ENCODE measurements at regions of chr11 and their contacts with region 1.

Region 1: GRCh38 chr11:59680287-59681154 is 11.7 kb upstream of the PATL1 start:
- DNase-seq: no peak
- H3K4me3 ChIP-seq: no peak overlapping the region
- H3K27ac ChIP-seq: no peak overlapping the region
- H3K4me1 ChIP-seq: no peaks in the 10 kb centered on the region
- H3K27me3 ChIP-seq: no peaks in the 10 kb centered on the region
- CTCF ChIP-seq: peak; percentile 20 to 35 (median 33)
- POLR2A ChIP-seq: no peak

Region 2: DNA sequence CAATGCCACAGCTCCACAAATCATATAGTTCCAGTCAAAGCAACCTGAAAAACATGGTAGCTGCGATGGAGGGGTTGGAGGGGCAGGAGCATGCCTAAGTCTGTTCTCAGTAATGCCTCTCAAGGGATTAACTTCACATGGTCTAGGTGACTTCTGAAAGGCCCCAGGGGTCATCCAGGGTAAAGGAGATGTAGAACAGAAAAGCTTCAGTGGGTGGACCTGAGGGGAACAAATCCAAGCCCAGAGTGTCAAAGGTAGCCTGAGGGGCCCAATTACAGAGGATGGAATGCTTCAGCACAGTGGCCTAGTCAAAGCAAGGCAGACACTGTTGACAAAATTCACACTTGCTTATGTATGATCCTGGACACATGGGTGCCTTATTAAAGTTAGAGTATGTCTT is 145.8 kb before region 1 on chr11:
- intact Hi-C with region 1: loop called (anchors 10 kb)
- DNase-seq: no peak
- H3K4me3 ChIP-seq: no peak overlapping the region
- H3K27ac ChIP-seq: no peak overlapping the region
- H3K4me1 ChIP-seq: peaks cover 6% of the 10 kb centered on the region
- H3K27me3 ChIP-seq: no peaks in the 10 kb centered on the region
- CTCF ChIP-seq: no peak
- POLR2A ChIP-seq: no peak

Region 3: DNA sequence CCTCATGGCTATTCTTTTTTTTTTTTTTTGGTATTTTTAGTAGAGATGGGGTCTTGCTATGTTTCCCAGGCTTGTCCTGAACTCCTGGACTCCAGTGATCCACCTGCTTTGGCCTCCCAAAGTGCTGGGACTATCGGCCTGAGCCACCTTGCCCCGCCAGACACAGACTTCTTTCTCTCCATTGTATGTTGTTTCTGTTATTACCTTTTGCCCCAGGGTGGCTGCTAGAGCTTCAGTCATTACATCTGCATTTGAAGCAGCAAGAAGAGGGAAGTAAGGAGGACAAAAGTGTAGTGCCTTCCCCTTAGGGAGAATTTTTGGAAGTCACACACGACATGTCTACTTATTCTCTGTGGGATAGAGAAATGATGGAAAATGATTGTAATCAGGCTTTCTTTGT is 54.8 kb before region 1 on chr11:
- intact Hi-C with region 1: no loop called
- DNase-seq: no peak
- H3K4me3 ChIP-seq: no peak overlapping the region
- H3K27ac ChIP-seq: no peak overlapping the region
- H3K4me1 ChIP-seq: no peaks in the 10 kb centered on the region
- H3K27me3 ChIP-seq: no peaks in the 10 kb centered on the region
- CTCF ChIP-seq: no peak
- POLR2A ChIP-seq: no peak

Region 4: GRCh38 chr11:59753650-59754493 is 73.4 kb after region 1 on chr11:
- intact Hi-C with region 1: no loop called
- DNase-seq: no peak
- H3K4me3 ChIP-seq: peak overlapping the region; percentile 60 to 97
- H3K27ac ChIP-seq: peak overlapping the region; percentile 100
- H3K4me1 ChIP-seq: peaks cover 28% of the 10 kb centered on the region
- H3K27me3 ChIP-seq: no peaks in the 10 kb centered on the region
- CTCF ChIP-seq: peak; percentile 93 to 95 (median 94)
- POLR2A ChIP-seq: no peak

Region 5: DNA sequence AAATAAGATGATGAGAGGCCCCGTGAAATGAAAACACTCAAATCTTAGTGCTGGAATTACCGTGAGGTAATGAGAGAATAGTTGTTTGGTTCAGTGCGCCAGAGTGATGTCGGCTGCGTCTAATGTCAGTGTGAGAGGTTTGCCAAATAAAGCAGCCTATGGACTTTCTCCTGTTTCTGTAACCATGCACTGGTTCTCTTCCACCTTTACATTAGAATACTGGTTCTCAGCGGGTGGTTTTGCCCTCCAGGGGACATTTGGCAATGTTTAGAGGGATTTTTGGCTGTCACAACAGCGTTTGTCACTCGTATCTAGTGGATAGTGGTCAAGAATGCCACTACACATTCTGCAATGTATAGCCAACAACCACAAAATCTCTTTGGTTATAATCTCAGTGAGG is 337.5 kb after region 1 on chr11:
- intact Hi-C with region 1: no loop called
- DNase-seq: no peak
- H3K4me3 ChIP-seq: no peak overlapping the region
- H3K27ac ChIP-seq: no peak overlapping the region
- H3K4me1 ChIP-seq: no peaks in the 10 kb centered on the region
- H3K27me3 ChIP-seq: no peaks in the 10 kb centered on the region
- CTCF ChIP-seq: no peak
- POLR2A ChIP-seq: no peak

Measured in vagina (tissue), 2 donors.